Activated CD4-positive, alpha-beta T cell treated with anti-CD3 and anti-CD28 coated beads, Interleukin-2, amount 10 ng/mL, durations not matched to agents 7 days and 5 days (primary cell): ENCODE measurements at regions of chr12 and their contacts with region 1.

Region 1: GRCh38 chr12:109844983-109845823 is 12.0 kb upstream of the TRPV4 start:
- DNase-seq: peak; percentile 88
- H3K4me3 Mint-ChIP-seq: peak overlapping the region; percentile 45
- H3K27ac Mint-ChIP-seq: peak overlapping the region; percentile 2
- H3K4me1 Mint-ChIP-seq: peaks cover 10% of the 10 kb centered on the region
- H3K27me3 Mint-ChIP-seq: no peaks in the 10 kb centered on the region

Region 2: DNA sequence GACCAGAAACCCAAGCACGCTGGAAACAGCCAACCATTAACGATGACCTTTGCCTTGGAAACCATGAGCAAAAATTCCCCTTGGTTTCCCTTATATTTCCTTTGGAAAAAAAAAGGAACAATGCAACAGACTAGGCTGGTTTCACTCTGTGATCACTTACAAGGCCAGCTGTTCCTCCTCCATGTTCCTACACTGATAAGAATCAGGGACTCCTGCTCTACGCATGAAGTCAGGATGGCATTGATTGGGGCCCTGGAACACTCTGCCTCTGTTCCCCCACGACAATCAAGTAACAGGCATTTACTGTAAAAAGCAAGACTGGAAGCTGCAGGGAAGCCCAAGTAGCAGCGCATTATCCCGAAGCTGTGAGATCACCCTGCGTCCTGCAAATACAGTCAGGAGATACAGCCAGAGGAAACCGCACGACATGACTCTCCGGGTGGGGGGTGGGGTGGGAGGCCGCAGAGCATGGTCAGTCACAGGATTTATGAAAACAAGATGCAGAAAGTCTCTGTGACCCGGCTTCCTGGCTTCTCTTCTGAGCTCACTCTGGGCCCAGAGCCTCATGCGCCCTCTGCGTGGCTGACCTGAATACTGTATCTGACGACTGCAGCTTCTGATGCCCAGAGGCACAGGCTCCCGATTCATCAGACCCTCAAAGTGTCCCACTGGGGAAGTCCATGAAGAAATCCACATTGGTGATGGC is 1018.9 kb before region 1 on chr12:
- CTCF ChIA-PET with region 1: no interaction called
- POLR2A ChIA-PET with region 1: no interaction called
- DNase-seq: no peak
- H3K4me3 Mint-ChIP-seq: no peak overlapping the region
- H3K27ac Mint-ChIP-seq: no peak overlapping the region
- H3K4me1 Mint-ChIP-seq: peaks cover 67% of the 10 kb centered on the region
- H3K27me3 Mint-ChIP-seq: no peaks in the 10 kb centered on the region

Region 3: GRCh38 chr12:109828236-109828550 is 17.0 kb before region 1 on chr12:
- CTCF ChIA-PET with region 1: interaction called, 18 read pairs
- POLR2A ChIA-PET with region 1: no interaction called
- DNase-seq: no peak
- H3K4me3 Mint-ChIP-seq: no peak overlapping the region
- H3K27ac Mint-ChIP-seq: no peak overlapping the region
- H3K4me1 Mint-ChIP-seq: no peaks in the 10 kb centered on the region
- H3K27me3 Mint-ChIP-seq: peaks cover 14% of the 10 kb centered on the region

Region 4: DNA sequence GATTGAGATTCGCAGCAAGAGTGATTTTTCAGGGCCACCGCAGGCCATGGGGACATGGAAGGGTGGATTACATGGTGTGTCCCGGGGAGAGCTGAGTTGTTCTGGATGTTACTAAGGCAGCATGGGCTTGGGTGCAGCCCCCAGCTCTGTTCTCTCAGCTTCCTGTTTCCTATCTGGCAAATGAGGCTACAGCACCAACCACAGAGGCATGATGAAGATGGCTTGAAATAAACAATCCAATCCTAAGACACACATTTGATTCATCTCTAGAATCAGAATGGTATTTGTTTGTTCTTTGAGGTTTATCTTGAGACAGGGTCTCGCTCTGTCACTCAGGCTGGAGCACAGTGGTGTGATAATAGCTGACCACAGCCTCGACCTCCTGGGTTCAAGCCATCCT is 13.6 kb after region 1 on chr12:
- CTCF ChIA-PET with region 1: interaction called, 22 read pairs
- POLR2A ChIA-PET with region 1: no interaction called
- DNase-seq: no peak
- H3K4me3 Mint-ChIP-seq: no peak overlapping the region
- H3K27ac Mint-ChIP-seq: peak overlapping the region; percentile 33
- H3K4me1 Mint-ChIP-seq: peaks cover 11% of the 10 kb centered on the region
- H3K27me3 Mint-ChIP-seq: no peaks in the 10 kb centered on the region